Activated naive CD4-positive, alpha-beta T cell treated with anti-CD3 and anti-CD28 coated beads for 36 hours (primary cell): ENCODE measurements at regions of chr7 and their contacts with region 1.

Region 1: GRCh38 chr7:111752022-111752582 is 189.8 kb upstream of the IMMP2L start:
- DNase-seq: peak; percentile 82
- H3K4me3 Mint-ChIP-seq: no peak overlapping the region
- H3K27ac Mint-ChIP-seq: no peak overlapping the region
- H3K4me1 Mint-ChIP-seq: no peaks in the 10 kb centered on the region
- H3K27me3 Mint-ChIP-seq: no peaks in the 10 kb centered on the region

Region 2: DNA sequence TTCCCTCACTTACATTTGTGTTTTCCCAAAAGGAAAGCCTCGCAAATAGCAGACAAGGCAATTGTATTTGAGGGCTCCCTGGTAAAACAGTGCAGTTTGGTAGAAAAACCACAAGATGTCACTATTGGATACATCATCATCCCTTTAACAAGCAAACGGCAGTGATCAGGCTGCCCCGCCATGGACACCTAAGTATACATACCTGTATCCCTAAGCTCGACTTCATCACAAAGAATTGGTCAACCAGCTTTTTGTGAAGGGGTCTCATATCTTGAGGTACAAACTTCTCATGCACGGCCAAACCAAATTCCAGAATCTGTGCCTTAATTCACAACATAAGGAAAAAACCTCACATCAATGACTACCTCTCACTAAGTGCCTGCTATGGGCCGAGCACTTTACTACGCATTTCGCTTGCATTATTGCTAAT is 10.3 kb before region 1 on chr7:
- CTCF ChIA-PET with region 1: interaction called, 18 read pairs
- intact Hi-C with region 1: no loop called
- DNase-seq: peak; percentile 55
- H3K4me3 Mint-ChIP-seq: no peak overlapping the region
- H3K27ac Mint-ChIP-seq: no peak overlapping the region
- H3K4me1 Mint-ChIP-seq: no peaks in the 10 kb centered on the region
- H3K27me3 Mint-ChIP-seq: peaks cover 2% of the 10 kb centered on the region

Region 3: GRCh38 chr7:111763221-111763801 is 11.2 kb after region 1 on chr7:
- CTCF ChIA-PET with region 1: interaction called, 10 read pairs
- intact Hi-C with region 1: no loop called
- DNase-seq: peak; percentile 11
- H3K4me3 Mint-ChIP-seq: no peak overlapping the region
- H3K27ac Mint-ChIP-seq: no peak overlapping the region
- H3K4me1 Mint-ChIP-seq: no peaks in the 10 kb centered on the region
- H3K27me3 Mint-ChIP-seq: no peaks in the 10 kb centered on the region

Region 4: DNA sequence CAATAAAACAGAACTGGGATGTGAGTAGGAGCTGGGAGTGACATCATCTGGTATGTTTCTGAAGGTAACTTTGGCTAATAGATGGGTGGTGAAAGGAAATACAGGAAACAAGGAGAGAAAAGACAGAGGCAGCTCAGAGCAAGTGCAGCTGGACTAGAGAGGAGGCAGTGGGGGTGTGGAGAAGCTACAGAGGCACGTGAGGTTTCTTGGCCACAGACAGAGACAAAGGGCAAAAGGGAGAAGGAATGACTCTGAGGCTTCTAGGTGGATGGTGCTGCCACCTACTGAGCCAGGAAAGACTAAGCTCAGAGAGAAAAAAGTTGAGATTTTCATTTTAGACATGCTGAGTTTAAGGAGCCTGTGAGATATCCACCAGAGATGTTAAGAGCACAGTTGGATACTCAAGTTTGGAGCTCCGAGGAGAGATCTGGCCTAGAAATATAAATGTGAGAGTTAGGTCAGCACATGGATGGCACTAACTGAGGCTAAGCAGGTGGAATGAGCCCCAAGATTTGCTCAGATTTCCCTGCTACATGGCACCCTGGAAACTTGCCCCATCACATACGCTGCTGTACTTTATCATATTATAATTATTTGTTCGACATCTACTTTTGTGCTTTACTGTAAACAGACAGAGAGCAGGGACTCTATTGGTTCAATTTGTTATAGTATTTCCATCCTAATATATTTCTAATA is 103.2 kb after region 1 on chr7:
- CTCF ChIA-PET with region 1: interaction called, 7 read pairs
- intact Hi-C with region 1: loop called (anchors 1 kb)
- DNase-seq: peak; percentile 24
- H3K4me3 Mint-ChIP-seq: no peak overlapping the region
- H3K27ac Mint-ChIP-seq: no peak overlapping the region
- H3K4me1 Mint-ChIP-seq: no peaks in the 10 kb centered on the region
- H3K27me3 Mint-ChIP-seq: peaks cover 3% of the 10 kb centered on the region

Region 5: DNA sequence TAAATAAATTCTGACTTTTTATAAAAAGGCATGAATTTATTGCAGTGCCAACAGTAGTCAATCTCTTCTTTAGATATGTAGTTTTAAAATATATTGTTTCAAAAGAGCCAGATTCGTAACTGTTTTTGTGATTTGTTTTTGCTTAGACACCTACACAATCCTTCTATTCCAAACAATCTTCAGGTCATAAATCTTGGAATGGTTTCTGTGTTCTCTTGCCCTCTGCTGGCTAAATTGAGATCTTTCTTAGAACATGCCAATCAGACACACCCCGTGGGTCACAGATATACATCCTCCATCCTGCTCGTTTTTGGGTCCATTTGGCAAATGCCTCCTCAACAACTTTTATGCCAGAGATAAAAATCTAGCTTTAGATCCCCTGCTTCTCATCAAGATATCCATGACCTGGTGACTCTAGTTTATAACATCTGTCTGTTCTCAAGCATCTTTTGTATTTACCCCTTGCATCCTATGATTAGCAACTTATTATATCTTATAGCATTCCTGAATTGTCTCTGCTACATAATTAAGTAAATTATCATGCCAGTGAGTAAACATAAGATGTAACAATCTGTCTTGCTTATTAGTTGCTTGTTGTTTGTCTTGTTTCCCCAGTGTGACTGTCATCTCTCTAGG is 662.9 kb after region 1 on chr7:
- CTCF ChIA-PET with region 1: interaction called, 4 read pairs
- intact Hi-C with region 1: loop called (anchors 1 kb)
- DNase-seq: no peak
- H3K4me3 Mint-ChIP-seq: no peak overlapping the region
- H3K27ac Mint-ChIP-seq: no peak overlapping the region
- H3K4me1 Mint-ChIP-seq: no peaks in the 10 kb centered on the region
- H3K27me3 Mint-ChIP-seq: peaks cover 10% of the 10 kb centered on the region

Region 6: GRCh38 chr7:112495810-112496462 is 743.8 kb after region 1 on chr7:
- CTCF ChIA-PET with region 1: interaction called, 10 read pairs
- intact Hi-C with region 1: loop called (anchors 1 kb)
- DNase-seq: peak; percentile 66
- H3K4me3 Mint-ChIP-seq: no peak overlapping the region
- H3K27ac Mint-ChIP-seq: no peak overlapping the region
- H3K4me1 Mint-ChIP-seq: no peaks in the 10 kb centered on the region
- H3K27me3 Mint-ChIP-seq: peaks cover 2% of the 10 kb centered on the region

Region 7: GRCh38 chr7:112898432-112899290 is 1146.6 kb after region 1 on chr7:
- CTCF ChIA-PET with region 1: no interaction called
- intact Hi-C with region 1: loop called (anchors 10 kb)
- DNase-seq: peak; percentile 61
- H3K4me3 Mint-ChIP-seq: no peak overlapping the region
- H3K27ac Mint-ChIP-seq: no peak overlapping the region
- H3K4me1 Mint-ChIP-seq: no peaks in the 10 kb centered on the region
- H3K27me3 Mint-ChIP-seq: no peaks in the 10 kb centered on the region